Dorsolateral prefrontal cortex (tissue), 120 donors: ENCODE measurements at regions of chr4 and their contacts with region 1.

Region 1: GRCh38 chr4:18980516-18981233 is 959.1 kb upstream of the LCORL start:
- DNase-seq: no peak
- H3K4me3 ChIP-seq: no peak overlapping the region
- H3K27ac ChIP-seq: no peak overlapping the region
- H3K27me3 ChIP-seq: no peaks in the 10 kb centered on the region
- CTCF ChIP-seq: no peak

Region 2: GRCh38 chr4:19164334-19164733 is 183.7 kb after region 1 on chr4:
- intact Hi-C with region 1: loop called in 1 of 2 experiments (anchors 5 kb)
- DNase-seq: no peak
- H3K4me3 ChIP-seq: no peak overlapping the region
- H3K27ac ChIP-seq: no peak overlapping the region
- H3K27me3 ChIP-seq: peaks cover 0 to 2% (median 0%) of the 10 kb centered on the region in 45 donors
- CTCF ChIP-seq: no peak